ENCODE measurements at regions of chr11 and their contacts with region 1.

Region 1: GRCh38 chr11:128624269-128625175 is 37.2 kb upstream of the ETS1 start:
- DNase-seq: peak; percentile 72
- ATAC-seq: peak; percentile 65
- H3K4me3 Mint-ChIP-seq: peak overlapping the region; percentile 77
- H3K27ac Mint-ChIP-seq: peak overlapping the region; percentile 92
- H3K4me1 Mint-ChIP-seq: peaks cover 69% of the 10 kb centered on the region
- H3K27me3 Mint-ChIP-seq: no peaks in the 10 kb centered on the region

Region 2: GRCh38 chr11:128610721-128611617 is 13.6 kb before region 1 on chr11:
- POLR2A ChIA-PET with region 1: interaction called, 28 read pairs
- DNase-seq: peak; percentile 63
- ATAC-seq: peak; percentile 94
- H3K4me3 Mint-ChIP-seq: peak overlapping the region; percentile 75
- H3K27ac Mint-ChIP-seq: peak overlapping the region; percentile 90
- H3K4me1 Mint-ChIP-seq: peaks cover 32% of the 10 kb centered on the region
- H3K27me3 Mint-ChIP-seq: no peaks in the 10 kb centered on the region

Region 3: DNA sequence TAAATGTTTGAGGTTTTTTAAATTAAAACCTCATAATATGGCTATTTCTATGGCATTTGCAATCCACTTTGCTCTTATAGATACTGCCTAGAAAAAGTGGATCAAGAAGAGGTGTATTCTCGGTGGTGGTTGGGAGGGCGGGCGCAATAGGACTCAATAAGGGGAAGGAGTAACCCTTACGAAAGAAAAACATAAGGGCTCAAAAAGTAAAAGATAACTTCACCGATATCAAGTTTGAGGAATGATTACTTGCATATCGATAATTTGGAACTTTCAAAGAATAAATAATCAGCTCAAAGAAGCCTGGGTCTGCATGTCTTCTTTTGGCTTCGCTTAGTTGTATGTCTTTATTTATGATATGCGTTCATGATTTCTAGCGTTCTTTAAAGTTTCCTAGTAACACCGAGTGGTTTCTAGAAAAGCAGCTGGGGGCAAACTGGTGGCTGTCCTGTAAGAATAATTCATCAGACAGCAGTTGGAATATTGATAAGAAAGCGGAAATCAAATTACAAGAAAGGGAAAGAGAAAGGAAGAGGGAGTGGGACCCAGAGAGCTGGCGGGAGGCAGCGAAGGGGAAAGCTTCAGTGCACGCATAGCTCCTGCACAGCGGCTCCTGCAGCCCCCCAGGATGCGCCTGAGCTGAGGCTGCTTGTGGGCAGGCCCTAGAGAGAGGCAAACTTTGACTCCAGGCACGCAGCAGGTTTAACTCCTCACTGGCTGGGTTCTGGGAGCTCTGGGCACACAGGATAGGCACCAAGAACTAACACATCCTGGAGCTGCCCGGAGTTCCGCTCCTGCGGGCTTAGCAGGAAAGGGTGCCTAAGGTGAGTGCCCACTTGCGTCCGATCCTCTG is 60.3 kb after region 1 on chr11:
- POLR2A ChIA-PET with region 1: no interaction called
- DNase-seq: no peak
- ATAC-seq: no peak
- H3K4me3 Mint-ChIP-seq: peak overlapping the region; percentile 81
- H3K27ac Mint-ChIP-seq: no peak overlapping the region
- H3K4me1 Mint-ChIP-seq: peaks cover 39% of the 10 kb centered on the region
- H3K27me3 Mint-ChIP-seq: peaks cover 63% of the 10 kb centered on the region

Measured in activated naive CD8-positive, alpha-beta T cell treated with anti-CD3 and anti-CD28 coated beads, Interleukin-2, amount 10 ng/mL, durations not matched to agents 7 days and 5 days (primary cell).